AG04450 (cell line): ENCODE measurements at regions of chr3 and their contacts with region 1.

Region 1: GRCh38 chr3:190321789-190322603 is at the start of gene CLDN1:
- DNase-seq: peak; percentile 39
- H3K4me3 ChIP-seq: peak within 1 kb of the TSS; percentile 67
- H3K27ac ChIP-seq: no peak within 1 kb of the TSS
- H3K27me3 ChIP-seq: no peaks in the 10 kb centered on the region
- CTCF ChIP-seq: peak; percentile 85
- polyA plus RNA-seq, gene CLDN1: 9.6 and 9.8 TPM in 2 replicates

Region 2: GRCh38 chr3:189602471-189602870 is 719.5 kb before region 1 on chr3:
- CTCF ChIA-PET with region 1: no interaction called
- POLR2A ChIA-PET with region 1: no interaction called
- DNase-seq: no peak
- H3K4me3 ChIP-seq: no peak overlapping the region
- H3K27ac ChIP-seq: no peak overlapping the region
- H3K27me3 ChIP-seq: no peaks in the 10 kb centered on the region
- CTCF ChIP-seq: no peak

Region 3: DNA sequence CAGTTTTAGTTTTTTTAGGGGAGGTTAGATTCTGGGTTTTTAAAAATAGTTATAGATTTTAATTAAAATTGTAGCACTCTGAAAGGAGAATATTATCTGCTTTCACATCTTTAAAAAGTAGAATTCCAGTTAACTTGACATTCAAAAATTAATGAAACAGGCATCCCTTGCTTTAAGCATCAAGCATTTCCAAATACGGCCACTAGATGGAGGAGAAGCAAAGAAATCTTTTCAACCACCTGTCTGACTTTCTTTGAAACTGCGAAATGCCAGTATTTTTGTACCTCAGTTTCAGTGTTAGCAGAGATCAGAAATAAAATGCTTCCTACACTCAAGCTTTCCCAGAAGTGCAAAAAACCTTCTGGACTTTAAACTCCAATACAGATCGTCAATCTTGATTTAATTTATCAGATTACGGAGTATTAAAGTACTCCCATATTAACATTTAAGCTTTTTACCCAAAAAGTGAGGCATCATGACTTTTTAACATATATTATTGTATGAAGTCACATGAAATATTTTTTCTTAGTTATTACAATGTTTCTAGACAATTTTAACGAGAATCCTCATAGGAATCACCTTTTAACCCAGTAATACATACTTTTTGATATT is 354.6 kb before region 1 on chr3:
- CTCF ChIA-PET with region 1: interaction called, 105 read pairs
- POLR2A ChIA-PET with region 1: no interaction called
- DNase-seq: peak; percentile 21
- H3K4me3 ChIP-seq: no peak overlapping the region
- H3K27ac ChIP-seq: no peak overlapping the region
- H3K27me3 ChIP-seq: no peaks in the 10 kb centered on the region
- CTCF ChIP-seq: peak; percentile 85

Region 4: GRCh38 chr3:190224863-190225692 is 96.9 kb before region 1 on chr3:
- CTCF ChIA-PET with region 1: interaction called, 70 read pairs
- POLR2A ChIA-PET with region 1: no interaction called
- DNase-seq: no peak
- H3K4me3 ChIP-seq: no peak overlapping the region
- H3K27ac ChIP-seq: no peak overlapping the region
- H3K27me3 ChIP-seq: no peaks in the 10 kb centered on the region
- CTCF ChIP-seq: peak; percentile 55

Region 5: GRCh38 chr3:190306513-190307165 is 15.4 kb before region 1 on chr3:
- CTCF ChIA-PET with region 1: interaction called, 18 read pairs
- POLR2A ChIA-PET with region 1: no interaction called
- DNase-seq: no peak
- H3K4me3 ChIP-seq: no peak overlapping the region
- H3K27ac ChIP-seq: no peak overlapping the region
- H3K27me3 ChIP-seq: no peaks in the 10 kb centered on the region
- CTCF ChIP-seq: no peak

Region 6: DNA sequence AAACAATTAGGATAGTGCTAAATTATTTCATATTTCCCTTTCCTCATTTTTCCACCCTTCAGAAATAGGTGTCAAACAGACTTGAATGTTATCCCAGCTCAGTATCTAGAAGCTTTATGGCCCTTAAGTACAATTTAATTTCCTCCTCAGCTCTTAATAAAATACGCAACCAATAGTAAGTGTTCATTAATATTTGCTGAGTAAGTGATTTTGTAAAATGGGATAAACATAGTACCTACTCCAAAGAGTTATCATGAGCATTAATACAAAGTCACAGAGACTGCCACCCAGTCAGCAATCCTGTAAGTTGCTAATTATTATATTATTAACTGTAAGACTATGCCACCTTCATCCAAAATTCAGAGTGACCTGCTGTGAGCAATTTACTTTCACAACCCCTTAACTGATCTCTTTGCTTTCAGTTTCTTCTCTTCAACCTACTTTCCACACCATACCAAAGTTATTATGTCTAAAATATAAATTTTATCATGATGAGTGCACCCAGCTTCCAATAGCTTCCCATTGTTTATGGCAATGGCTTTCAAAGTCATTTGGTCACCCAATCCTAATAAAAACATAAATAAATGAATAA is 31.0 kb after region 1 on chr3:
- CTCF ChIA-PET with region 1: interaction called, 23 read pairs
- POLR2A ChIA-PET with region 1: no interaction called
- DNase-seq: no peak
- H3K4me3 ChIP-seq: no peak overlapping the region
- H3K27ac ChIP-seq: no peak overlapping the region
- H3K27me3 ChIP-seq: no peaks in the 10 kb centered on the region
- CTCF ChIP-seq: no peak

Region 7: GRCh38 chr3:190424478-190425439 is 102.8 kb after region 1 on chr3:
- CTCF ChIA-PET with region 1: interaction called, 40 read pairs
- POLR2A ChIA-PET with region 1: no interaction called
- DNase-seq: peak; percentile 37
- H3K4me3 ChIP-seq: no peak overlapping the region
- H3K27ac ChIP-seq: no peak overlapping the region
- H3K27me3 ChIP-seq: no peaks in the 10 kb centered on the region
- CTCF ChIP-seq: peak; percentile 75

Region 8: GRCh38 chr3:190883973-190884832 is 562.2 kb after region 1 on chr3:
- CTCF ChIA-PET with region 1: no interaction called
- POLR2A ChIA-PET with region 1: no interaction called
- DNase-seq: peak; percentile 38
- H3K4me3 ChIP-seq: no peak overlapping the region
- H3K27ac ChIP-seq: no peak overlapping the region
- H3K27me3 ChIP-seq: no peaks in the 10 kb centered on the region
- CTCF ChIP-seq: peak; percentile 97